Right cardiac atrium (tissue), 5 donors: ENCODE measurements at regions of chr5 and their contacts with region 1.

Region 1: GRCh38 chr5:132386644-132387286 is 17.3 kb downstream of the SLC22A5 start:
- DNase-seq: peak; percentile 73 to 89 (median 86)
- ATAC-seq: peak; percentile 86
- H3K4me3 ChIP-seq: no peak overlapping the region
- H3K27ac ChIP-seq: peak overlapping the region; percentile 91
- H3K4me1 ChIP-seq: peaks cover 10% of the 10 kb centered on the region
- H3K27me3 ChIP-seq: no peaks in the 10 kb centered on the region

Region 2: GRCh38 chr5:132203464-132203818 is 183.3 kb before region 1 on chr5:
- intact Hi-C with region 1: no loop called
- DNase-seq: no peak
- ATAC-seq: peak in 1 of 2 donors; percentile 5
- H3K4me3 ChIP-seq: no peak overlapping the region
- H3K27ac ChIP-seq: peak overlapping the region; percentile 13
- H3K4me1 ChIP-seq: peaks cover 21% of the 10 kb centered on the region
- H3K27me3 ChIP-seq: no peaks in the 10 kb centered on the region

Region 3: GRCh38 chr5:132500931-132501630 is 114.3 kb after region 1 on chr5:
- intact Hi-C with region 1: loop called (anchors 2 to 5 kb)
- DNase-seq: peak; percentile 55 to 81 (median 79)
- ATAC-seq: peak; percentile 6 to 18
- H3K4me3 ChIP-seq: no peak overlapping the region
- H3K27ac ChIP-seq: peak overlapping the region; percentile 1
- H3K4me1 ChIP-seq: peaks cover 10% of the 10 kb centered on the region
- H3K27me3 ChIP-seq: no peaks in the 10 kb centered on the region

Region 4: DNA sequence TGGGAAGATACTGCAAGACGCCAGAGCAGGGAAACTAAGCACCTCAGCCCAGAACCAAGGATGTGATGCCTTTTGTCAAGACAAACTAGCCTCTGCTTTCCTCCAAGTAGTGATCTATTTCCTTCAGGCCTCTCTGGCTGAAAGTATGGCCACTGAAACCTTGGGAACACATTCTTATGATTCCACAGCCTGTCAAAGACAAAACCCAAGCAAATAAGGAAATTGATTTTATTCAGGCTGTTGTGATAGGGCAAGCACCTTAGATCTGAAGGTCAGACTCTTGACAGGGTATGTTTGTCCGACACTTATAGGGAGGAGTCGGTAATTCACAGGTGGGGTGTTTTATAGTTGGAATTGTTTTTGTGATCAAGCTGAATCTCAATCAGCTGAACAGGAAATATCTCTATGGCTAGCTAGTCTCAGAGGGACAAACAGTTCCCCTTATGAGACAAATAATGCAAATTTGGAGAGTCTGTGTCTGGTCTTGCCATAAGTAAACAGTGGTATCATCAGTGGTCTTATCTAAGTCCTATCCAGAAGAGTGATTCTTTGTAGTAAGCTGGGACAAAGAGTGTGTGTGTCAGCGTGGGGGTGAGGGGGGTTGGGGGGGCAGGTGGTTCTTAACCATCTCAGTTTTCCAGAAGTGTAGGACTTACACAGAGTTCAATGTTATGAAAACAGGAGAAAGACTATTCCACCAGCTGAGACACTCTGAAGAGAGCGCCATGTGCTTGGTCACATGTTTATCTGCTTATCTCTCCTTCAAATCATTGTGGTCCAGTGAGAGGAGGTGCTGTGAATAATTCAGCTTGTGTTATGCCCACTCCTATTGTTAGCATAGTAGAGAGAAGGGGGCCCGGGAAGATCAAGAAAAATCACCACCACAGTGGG is 646.3 kb after region 1 on chr5:
- intact Hi-C with region 1: no loop called
- DNase-seq: no peak
- ATAC-seq: no peak
- H3K4me3 ChIP-seq: no peak overlapping the region
- H3K27ac ChIP-seq: no peak overlapping the region
- H3K4me1 ChIP-seq: no peaks in the 10 kb centered on the region
- H3K27me3 ChIP-seq: no peaks in the 10 kb centered on the region